Heart left ventricle (tissue), 16 donors: ENCODE measurements at regions of chr20 and their contacts with region 1.

Region 1: GRCh38 chr20:31822421-31823330 is 3.5 kb downstream of the MYLK2 start:
- DNase-seq: peak; percentile 81 to 91 (median 89)
- ATAC-seq: peak; percentile 75 to 90 (median 82)
- H3K4me3 ChIP-seq: no peak overlapping the region
- H3K27ac ChIP-seq: peak overlapping the region in 9 of 12 donors; percentile 7 to 66 (median 24)
- H3K4me1 ChIP-seq: peaks cover 0 to 21% (median 5%) of the 10 kb centered on the region in 12 donors
- H3K27me3 ChIP-seq: no peaks in the 10 kb centered on the region
- CTCF ChIP-seq: peak; percentile 97 to 100 (median 99)
- POLR2A ChIP-seq: peak in 1 of 2 donors; percentile 14

Region 2: DNA sequence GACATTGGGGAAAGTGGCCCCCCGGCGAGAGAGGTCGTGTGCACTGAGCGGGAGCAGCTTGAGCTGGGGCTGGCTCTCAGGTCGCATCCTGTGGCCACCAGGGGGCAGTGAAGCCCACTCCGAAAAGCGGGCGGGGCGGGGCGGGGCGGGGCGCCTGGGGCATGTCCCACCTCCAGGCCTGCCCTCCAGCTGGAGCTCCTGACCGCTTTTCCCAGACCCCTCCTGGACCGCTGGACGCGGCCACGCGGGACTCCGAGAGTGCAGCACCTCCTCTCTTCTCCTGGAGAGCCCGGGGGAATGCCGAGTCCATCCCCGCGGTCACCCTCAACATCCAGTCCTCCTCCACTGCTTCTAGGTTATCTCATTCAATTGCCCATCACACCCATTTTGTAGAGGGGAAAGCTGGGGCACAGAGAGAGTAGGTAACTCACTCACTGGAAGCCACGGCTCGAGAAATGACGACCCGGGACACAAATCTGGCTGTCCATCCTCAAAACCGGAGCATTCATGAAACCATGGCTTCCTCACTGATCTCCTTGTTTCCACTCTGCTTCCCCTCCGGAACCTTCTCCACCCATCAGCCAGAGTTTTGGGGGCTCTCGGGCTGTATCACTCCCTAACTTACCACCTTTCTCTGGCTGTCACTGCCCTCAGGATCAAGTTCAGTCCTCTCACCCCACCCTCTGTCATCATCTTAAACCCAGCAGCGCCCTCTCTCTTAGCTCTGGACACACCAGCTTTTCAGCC is 160.9 kb before region 1 on chr20:
- intact Hi-C with region 1: loop called in 2 of 10 experiments (anchors 10 kb)
- DNase-seq: peak; percentile 86 to 90 (median 87)
- ATAC-seq: peak; percentile 57 to 89 (median 85)
- H3K4me3 ChIP-seq: peak overlapping the region in 11 of 12 donors; percentile 2 to 60 (median 42)
- H3K27ac ChIP-seq: peak overlapping the region; percentile 43 to 84 (median 78)
- H3K4me1 ChIP-seq: peaks cover 18 to 53% (median 44%) of the 10 kb centered on the region in 12 donors
- H3K27me3 ChIP-seq: no peaks in the 10 kb centered on the region
- CTCF ChIP-seq: peak; percentile 74 to 93 (median 86)
- POLR2A ChIP-seq: peak in 1 of 2 donors; percentile 78

Region 3: DNA sequence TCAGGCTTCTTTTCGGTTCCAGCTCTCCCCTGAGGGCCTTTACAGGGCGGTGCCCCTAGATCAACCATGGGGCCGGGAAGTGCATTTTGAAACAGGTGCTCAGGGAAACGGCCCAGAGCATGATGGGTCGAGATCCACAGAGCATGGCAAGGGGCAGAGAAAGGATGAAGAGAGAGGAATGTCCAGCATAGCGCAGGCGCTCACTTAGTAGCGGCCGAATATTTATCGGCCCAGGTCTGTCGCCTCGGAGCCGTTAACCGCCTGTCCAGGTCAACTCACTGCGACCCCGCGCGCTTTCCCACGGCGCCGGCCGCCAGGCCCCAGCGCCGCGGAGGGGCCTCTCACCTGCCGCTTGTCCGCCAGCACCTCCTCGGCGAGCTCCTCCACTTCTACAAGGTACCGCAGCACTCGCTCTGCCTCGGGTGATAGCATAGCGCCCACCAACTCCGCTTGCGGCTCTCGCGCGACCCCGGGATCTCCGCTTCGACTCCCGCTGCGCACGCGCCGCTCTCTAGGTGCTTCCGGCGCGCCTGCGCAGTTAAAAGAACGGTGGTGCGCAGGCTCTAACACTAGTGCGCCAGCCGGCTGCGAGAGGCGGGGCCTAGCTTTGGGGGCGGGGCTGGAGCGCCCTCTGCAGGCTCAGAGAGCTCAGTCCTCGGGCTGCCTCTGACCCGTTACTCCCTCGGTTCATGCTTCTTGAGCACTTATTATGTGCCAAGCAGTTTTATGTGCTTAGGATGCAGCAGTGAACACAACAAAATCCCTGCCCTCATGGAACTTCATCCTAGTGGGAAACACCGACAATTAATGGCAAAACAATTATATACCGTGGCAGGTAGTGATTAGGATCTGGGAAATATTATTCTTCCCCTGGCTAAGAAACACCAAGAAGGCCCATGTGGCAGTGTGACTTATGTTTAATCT is 129.1 kb after region 1 on chr20 and contains the start of gene PDRG1:
- intact Hi-C with region 1: loop called in 4 of 10 experiments (anchors 2 to 10 kb)
- DNase-seq: peak; percentile 94 to 98 (median 96)
- ATAC-seq: peak; percentile 96 to 99 (median 98)
- H3K4me3 ChIP-seq: peak within 1 kb of the TSS; percentile 65 to 100 (median 94)
- H3K27ac ChIP-seq: peak within 1 kb of the TSS in 11 of 12 donors; percentile 69 to 95 (median 85)
- H3K4me1 ChIP-seq: peaks cover 0 to 20% (median 15%) of the 10 kb centered on the region in 12 donors
- H3K27me3 ChIP-seq: peaks cover 0 to 8% (median 0%) of the 10 kb centered on the region in 9 donors
- CTCF ChIP-seq: peak; percentile 93 to 99 (median 97)
- POLR2A ChIP-seq: peak in 1 of 2 donors; percentile 89
- total RNA-seq, gene PDRG1: 5.2 to 10.7 (median 7.3) TPM

Region 4: GRCh38 chr20:32077190-32077589 is 254.5 kb after region 1 on chr20:
- intact Hi-C with region 1: loop called in 1 of 10 experiments (anchors 10 kb)
- DNase-seq: no peak
- ATAC-seq: no peak
- H3K4me3 ChIP-seq: no peak overlapping the region
- H3K27ac ChIP-seq: no peak overlapping the region
- H3K4me1 ChIP-seq: peaks cover 0 to 12% (median 0%) of the 10 kb centered on the region in 12 donors
- H3K27me3 ChIP-seq: peaks cover 0 to 3% (median 0%) of the 10 kb centered on the region in 9 donors
- CTCF ChIP-seq: no peak
- POLR2A ChIP-seq: no peak

Region 5: DNA sequence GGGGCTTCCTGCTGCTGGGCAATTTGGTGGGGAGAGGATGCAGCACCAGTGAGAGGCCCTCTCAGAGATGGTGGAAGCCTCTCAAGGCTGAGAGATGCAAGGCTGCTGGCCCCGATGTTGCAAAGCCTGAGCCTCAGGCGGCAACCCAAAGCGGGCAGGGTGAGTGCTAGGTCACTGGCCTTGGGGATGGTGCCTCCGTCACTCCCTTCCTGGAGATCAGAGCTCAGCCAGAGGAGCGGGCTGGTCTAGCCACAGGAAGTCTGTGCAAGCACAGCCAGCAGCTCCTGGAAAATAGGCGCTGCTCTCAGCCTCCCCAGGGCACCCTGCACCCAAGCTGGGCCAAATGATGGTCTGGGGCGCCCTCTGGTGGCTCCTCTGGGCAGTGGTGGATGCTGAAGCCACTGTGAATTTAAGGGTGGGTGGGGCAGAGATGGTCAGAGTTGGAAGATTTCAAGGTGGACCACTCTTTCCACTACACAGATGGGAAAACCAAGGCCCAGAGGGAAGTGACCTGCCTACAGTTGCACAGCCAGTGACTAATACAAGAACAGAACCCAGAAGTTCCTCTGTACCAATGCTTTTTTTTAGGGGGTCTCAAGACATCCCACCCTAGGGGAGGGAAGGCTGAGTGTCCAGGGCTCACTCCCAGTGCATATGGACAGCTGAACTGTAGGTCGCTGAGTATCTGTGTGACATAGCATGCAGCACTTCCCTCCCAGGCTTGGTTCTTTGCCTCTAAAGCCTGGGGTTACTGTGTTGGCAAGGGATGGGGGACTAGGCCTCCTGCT is 830.3 kb after region 1 on chr20:
- intact Hi-C with region 1: loop called in 3 of 10 experiments (anchors 10 kb)
- DNase-seq: peak; percentile 85 to 92 (median 86)
- ATAC-seq: peak; percentile 93 to 98 (median 97)
- H3K4me3 ChIP-seq: no peak overlapping the region
- H3K27ac ChIP-seq: no peak overlapping the region
- H3K4me1 ChIP-seq: peaks cover 0 to 5% (median 1%) of the 10 kb centered on the region in 12 donors
- H3K27me3 ChIP-seq: no peaks in the 10 kb centered on the region
- CTCF ChIP-seq: peak; percentile 90 to 96 (median 94)
- POLR2A ChIP-seq: no peak